PC-9 (cell line): ENCODE measurements at regions of chr1 and their contacts with region 1.

Region 1: GRCh38 chr1:63773815-63774616 is at the start of gene ROR1:
- DNase-seq: peak; percentile 72 to 91
- H3K4me3 ChIP-seq: peak within 1 kb of the TSS; percentile 93
- H3K27ac ChIP-seq: peak within 1 kb of the TSS; percentile 60
- H3K4me1 ChIP-seq: peaks cover 50% of the 10 kb centered on the region
- H3K27me3 ChIP-seq: no peaks in the 10 kb centered on the region
- CTCF ChIP-seq: peak; percentile 62
- total RNA-seq, gene ROR1: 16.0 and 19.0 TPM in 2 replicates

Region 2: DNA sequence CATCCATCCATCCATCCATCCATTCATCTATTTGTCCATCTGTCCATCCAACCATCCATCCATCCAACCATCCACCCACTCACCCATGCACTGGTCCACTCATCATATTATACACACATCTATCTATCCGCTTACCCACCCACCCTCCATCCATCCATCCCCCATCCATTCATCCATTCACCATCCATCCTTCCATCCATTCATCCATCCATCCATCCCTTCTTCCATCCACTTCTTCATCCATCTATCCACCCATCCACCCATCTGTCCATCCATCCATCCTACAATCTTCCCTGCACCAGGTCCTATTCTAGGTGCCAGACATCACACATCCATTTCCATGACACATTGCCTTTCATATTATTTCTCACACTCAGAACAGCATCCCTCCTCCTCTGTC is 87.3 kb before region 1 on chr1:
- CTCF ChIA-PET with region 1: interaction called, 11 read pairs
- POLR2A ChIA-PET with region 1: no interaction called
- intact Hi-C with region 1: loop called (anchors 1 kb)
- DNase-seq: no peak
- H3K4me3 ChIP-seq: no peak overlapping the region
- H3K27ac ChIP-seq: no peak overlapping the region
- H3K4me1 ChIP-seq: 0 out of 2 replicates have a peak, but pooled peaks cover 2% of the 10 kb centered on the region
- H3K27me3 ChIP-seq: no peaks in the 10 kb centered on the region
- CTCF ChIP-seq: no peak

Region 3: DNA sequence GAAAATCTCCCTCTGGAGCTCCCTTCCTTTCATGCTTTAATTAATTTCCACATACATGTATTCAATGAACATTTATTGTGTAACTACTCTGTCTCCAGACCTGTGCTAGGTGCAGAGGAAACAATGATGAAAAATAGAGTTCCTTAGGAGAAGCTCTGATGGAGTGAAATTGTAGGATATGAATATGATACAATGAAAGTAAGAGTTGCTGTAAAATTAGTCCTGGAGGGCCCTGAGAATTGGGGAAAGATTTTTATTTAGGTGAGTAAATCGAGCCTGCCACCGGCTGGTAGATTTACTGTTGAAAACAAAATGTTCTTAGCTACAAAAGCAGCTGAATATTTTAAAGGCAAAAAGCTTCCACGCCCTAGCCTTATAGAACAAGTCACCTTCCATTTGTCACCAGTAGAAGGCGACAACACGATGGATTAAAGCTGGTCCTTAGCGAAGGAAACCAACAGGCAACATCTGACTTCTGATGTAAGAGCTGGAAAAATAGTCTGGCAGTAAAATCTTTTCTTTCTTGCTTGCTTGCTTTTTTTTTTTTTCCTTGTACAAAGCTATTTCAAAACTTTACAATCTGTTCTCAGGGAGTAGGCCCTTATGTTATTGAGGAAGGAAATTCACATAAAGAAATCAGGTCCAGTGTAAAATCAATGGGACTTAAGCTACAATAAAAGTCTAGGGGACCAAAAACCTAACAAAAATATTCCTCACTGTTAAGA is 82.2 kb before region 1 on chr1:
- CTCF ChIA-PET with region 1: interaction called, 11 read pairs
- POLR2A ChIA-PET with region 1: no interaction called
- intact Hi-C with region 1: loop called (anchors 1 kb)
- DNase-seq: peak; percentile 62 to 86
- H3K4me3 ChIP-seq: no peak overlapping the region
- H3K27ac ChIP-seq: peak overlapping the region; percentile 61
- H3K4me1 ChIP-seq: peaks cover 11% of the 10 kb centered on the region
- H3K27me3 ChIP-seq: no peaks in the 10 kb centered on the region
- CTCF ChIP-seq: peak; percentile 88

Region 4: DNA sequence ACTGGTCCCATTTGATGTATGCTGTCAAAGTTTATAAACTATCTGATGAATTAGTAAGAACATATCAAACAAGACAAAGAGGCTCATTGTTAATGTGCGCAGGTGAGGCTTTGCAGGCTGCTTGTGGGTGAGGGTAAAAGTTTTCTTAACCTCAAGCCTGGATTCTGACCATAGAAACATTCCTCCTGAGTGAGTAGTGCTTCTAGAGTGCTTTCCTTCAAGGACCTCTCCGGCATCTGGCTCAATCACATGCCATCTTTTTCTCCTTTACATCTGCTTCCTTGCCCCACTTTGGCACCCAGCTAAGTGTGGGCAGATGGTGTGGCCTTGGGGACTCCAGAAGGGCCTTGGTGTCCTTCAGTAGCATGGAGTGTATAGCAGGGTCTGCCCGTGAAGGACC is 103.8 kb after region 1 on chr1:
- CTCF ChIA-PET with region 1: no interaction called
- POLR2A ChIA-PET with region 1: no interaction called
- intact Hi-C with region 1: loop called (anchors 10 kb)
- DNase-seq: peak; percentile 65 to 96
- H3K4me3 ChIP-seq: peak overlapping the region; percentile 1; the same call in 1 of the 2 replicates
- H3K27ac ChIP-seq: peak overlapping the region; percentile 94
- H3K4me1 ChIP-seq: peaks cover 70% of the 10 kb centered on the region
- H3K27me3 ChIP-seq: no peaks in the 10 kb centered on the region
- CTCF ChIP-seq: no peak

Region 5: GRCh38 chr1:64006276-64007051 is 232.4 kb after region 1 on chr1:
- CTCF ChIA-PET with region 1: no interaction called
- POLR2A ChIA-PET with region 1: interaction called, 3 read pairs
- intact Hi-C with region 1: loop called (anchors 1 kb)
- DNase-seq: peak; percentile 71 to 98
- H3K4me3 ChIP-seq: no peak overlapping the region; the same call in 1 of the 2 replicates
- H3K27ac ChIP-seq: peak overlapping the region; percentile 82
- H3K4me1 ChIP-seq: peaks cover 47% of the 10 kb centered on the region
- H3K27me3 ChIP-seq: no peaks in the 10 kb centered on the region
- CTCF ChIP-seq: no peak

Region 6: DNA sequence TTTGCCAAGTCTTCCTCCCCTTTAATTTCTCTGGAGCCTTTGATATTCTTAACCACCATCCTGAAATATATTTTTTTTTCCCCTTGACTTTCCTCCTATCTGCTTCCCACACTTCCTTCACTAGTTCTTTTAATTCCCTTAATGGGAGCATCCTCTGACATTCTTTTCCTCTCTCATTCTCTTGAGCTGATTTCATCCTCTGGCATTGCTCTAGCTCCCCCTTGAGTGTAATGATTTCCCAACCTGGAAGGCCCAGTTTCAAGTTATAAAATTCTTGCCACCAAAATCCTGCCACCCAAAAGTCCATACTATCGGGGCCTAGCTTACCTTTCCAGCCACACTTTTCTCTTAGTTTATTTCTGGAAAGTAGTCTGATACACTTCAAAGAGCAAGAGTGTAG is 390.0 kb after region 1 on chr1:
- CTCF ChIA-PET with region 1: no interaction called
- POLR2A ChIA-PET with region 1: no interaction called
- intact Hi-C with region 1: loop called (anchors 10 kb)
- DNase-seq: no peak
- H3K4me3 ChIP-seq: no peak overlapping the region
- H3K27ac ChIP-seq: no peak overlapping the region
- H3K4me1 ChIP-seq: no peaks in the 10 kb centered on the region
- H3K27me3 ChIP-seq: no peaks in the 10 kb centered on the region
- CTCF ChIP-seq: peak; percentile 45; the same call in 1 of the 2 replicates

Region 7: DNA sequence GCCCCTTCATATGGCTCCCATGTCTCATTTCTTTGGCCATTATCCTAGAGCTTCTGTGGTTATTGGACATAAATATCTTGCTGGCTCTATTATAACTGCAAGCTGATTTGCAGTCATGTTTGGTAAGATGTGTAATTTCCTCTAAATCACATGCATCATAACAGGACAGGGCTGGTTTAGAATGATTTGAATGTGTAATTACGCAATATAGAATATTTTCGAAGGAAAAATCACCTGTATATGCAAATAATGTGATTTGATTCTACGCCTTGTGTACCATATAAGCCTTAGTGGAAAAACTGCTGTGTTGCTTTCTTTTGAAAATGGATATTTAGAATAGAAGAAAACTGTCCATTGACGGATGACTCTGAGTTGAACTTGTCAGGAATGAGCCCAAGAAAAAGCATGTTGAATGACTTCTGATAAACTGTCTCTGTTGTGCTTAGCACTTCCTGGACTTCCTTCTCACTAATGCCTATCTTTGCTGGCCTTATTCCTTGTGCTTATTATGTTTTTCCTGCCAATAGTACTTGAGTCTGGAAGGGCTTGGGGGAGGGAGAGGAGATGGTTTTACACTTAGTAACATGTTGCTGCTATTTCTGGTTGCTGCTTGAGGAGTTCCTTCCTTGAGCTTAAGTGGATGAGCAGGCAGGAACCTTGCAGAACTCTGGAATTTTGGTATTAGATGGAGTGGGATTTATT is 702.4 kb after region 1 on chr1:
- CTCF ChIA-PET with region 1: no interaction called
- POLR2A ChIA-PET with region 1: interaction called, 18 read pairs
- intact Hi-C with region 1: no loop called
- DNase-seq: no peak
- H3K4me3 ChIP-seq: no peak overlapping the region
- H3K27ac ChIP-seq: no peak overlapping the region
- H3K4me1 ChIP-seq: peaks cover 12% of the 10 kb centered on the region; the same call in 1 of the 2 replicates
- H3K27me3 ChIP-seq: no peaks in the 10 kb centered on the region; the same call in 1 of the 2 replicates
- CTCF ChIP-seq: no peak